Transverse colon (tissue), 4 donors: ENCODE measurements at regions of chr11 and their contacts with region 1.

Region 1: DNA sequence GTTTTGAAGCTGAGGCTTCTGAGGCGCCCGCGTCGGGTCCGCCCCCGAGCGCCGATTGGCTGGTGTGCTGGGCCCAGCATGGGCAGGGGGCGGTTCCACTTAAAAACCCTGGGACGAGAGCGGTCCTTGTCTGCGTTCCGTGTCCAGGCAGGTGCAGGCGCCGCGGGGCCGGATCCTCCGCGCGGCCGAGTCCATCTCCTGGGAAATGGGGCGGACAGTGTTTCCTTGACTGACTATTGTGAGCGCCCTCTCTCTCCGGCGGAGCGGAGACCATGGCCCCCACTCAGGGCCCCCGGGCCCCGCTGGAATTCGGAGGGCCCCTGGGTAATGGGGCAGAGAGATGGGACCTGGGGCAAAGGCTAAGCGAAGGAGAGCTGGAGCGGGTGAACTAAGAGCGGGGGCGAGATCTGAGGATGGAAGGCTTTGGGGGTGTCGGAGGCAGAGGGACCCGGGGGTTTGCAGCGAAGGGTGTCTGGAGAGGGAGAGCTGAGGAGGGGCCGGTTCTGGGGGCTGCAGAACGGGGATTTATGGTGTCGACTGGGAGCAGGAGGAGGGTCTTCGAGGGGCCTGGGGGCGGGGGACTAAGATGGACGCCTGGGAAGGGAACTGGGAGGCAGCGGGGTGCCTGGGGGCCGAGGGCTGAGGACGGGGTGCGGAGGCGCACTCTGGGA is at the start of gene TM7SF2:
- DNase-seq: peak; percentile 98
- H3K4me3 ChIP-seq: peak within 1 kb of the TSS; percentile 37 to 57 (median 51)
- H3K27ac ChIP-seq: peak within 1 kb of the TSS; percentile 76 to 85 (median 80)
- H3K4me1 ChIP-seq: peaks cover 19 to 45% (median 31%) of the 10 kb centered on the region in 4 donors
- H3K27me3 ChIP-seq: no peaks in the 10 kb centered on the region
- CTCF ChIP-seq: no peak
- EP300 ChIP-seq: no peak
- POLR2A ChIP-seq: peak; percentile 91
- total RNA-seq, gene TM7SF2: 29.4 to 59.5 (median 42.3) TPM

Region 2: GRCh38 chr11:65013692-65014145 is 98.2 kb before region 1 on chr11:
- in situ Hi-C with region 1: no loop called
- intact Hi-C with region 1: loop called (anchors 5 kb)
- DNase-seq: peak; percentile 92
- H3K4me3 ChIP-seq: peak overlapping the region; percentile 54 to 74 (median 74)
- H3K27ac ChIP-seq: peak overlapping the region; percentile 98 to 100 (median 100)
- H3K4me1 ChIP-seq: peaks cover 15 to 24% (median 17%) of the 10 kb centered on the region in 4 donors
- H3K27me3 ChIP-seq: no peaks in the 10 kb centered on the region
- CTCF ChIP-seq: peak in 2 of 5 experiments; percentile 45 to 94
- EP300 ChIP-seq: no peak
- POLR2A ChIP-seq: peak; percentile 75